Aorta (tissue), 5 donors: ENCODE measurements at regions of chr2 and their contacts with region 1.

Region 1: DNA sequence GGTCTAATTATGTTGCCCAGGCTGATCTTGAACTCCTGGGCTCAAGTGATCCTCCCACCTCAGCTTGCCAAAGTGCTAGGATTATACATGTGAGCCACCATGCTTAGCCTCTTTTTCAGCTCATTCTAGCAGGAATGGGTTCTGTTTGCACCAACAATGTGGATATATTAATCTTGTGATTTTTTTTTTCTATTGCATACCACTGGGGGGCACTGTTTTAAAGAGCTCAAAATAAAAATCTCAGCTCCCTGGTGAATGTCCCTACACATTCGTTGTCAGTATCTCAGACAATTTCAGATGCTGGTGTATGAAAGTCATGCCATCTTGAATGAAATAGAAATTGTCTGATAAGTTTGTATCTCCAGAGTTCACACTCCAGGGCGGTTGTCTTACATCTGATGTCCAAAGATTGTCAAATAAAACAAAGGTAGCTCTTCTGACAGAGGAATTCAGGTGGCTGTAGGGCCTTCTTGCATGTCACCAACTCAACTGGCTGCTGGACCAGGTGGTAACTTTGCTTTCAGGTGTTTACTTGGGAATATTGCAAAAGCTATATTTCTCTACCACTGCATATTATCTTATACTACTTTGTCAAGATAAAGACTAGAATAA is 3.1 kb upstream of the MATN3 start:
- DNase-seq: no peak
- ATAC-seq: peak; percentile 69
- H3K4me3 ChIP-seq: no peak overlapping the region
- H3K27ac ChIP-seq: no peak overlapping the region
- H3K4me1 ChIP-seq: no peaks in the 10 kb centered on the region
- H3K27me3 ChIP-seq: no peaks in the 10 kb centered on the region

Region 2: GRCh38 chr2:19989681-19990415 is 25.7 kb before region 1 on chr2 and contains the start of gene WDR35:
- intact Hi-C with region 1: loop called in 1 of 2 experiments (anchors 2 kb)
- DNase-seq: peak; percentile 94 to 97
- ATAC-seq: peak; percentile 98
- H3K4me3 ChIP-seq: peak within 1 kb of the TSS; percentile 43 to 81
- H3K27ac ChIP-seq: peak within 1 kb of the TSS in 1 of 2 donors; percentile 72
- H3K4me1 ChIP-seq: no peaks in the 10 kb centered on the region
- H3K27me3 ChIP-seq: no peaks in the 10 kb centered on the region
- total RNA-seq, gene WDR35: 7.5 to 9.8 TPM

Region 3: DNA sequence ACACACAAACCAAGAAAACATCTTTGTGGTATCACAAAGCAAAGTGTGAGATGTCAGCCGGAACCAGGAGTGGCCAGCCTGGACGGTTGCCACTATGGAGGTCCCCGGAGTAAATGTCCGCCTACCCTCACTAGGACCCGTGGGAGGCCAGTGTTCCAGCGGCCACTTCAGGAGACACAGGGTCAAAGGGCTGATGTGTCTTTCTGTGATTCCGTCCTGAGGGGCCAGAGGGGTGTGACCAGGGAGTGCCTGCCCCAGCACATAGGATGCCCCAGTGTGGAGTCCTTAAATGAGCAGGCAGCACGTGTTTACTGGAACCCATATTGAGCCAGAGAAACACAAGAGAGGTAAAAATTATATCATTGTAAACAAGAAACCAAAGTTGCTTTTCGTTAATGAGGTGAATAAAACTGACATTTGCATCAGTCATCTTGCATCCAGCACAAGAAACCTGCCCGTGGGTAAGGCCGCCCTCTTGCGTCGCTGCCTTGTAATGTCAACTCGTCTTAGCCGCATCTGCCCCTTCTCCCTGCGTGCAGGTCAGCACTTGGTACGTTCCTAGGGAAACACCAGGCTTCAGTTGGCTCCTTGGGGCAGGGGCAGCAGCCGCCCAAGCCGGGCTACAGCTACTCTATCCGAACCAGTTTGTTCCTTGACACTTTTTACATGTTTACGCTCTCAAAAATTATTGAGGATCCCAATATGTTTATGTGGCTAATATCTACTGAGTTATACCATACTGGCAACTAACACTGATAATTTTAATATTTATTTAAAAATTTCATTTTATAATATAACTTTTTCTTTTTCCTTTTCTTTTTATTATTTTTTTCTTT is 82.5 kb after region 1 on chr2:
- intact Hi-C with region 1: loop called (anchors 1 kb)
- DNase-seq: peak; percentile 87 to 94
- ATAC-seq: peak; percentile 86
- H3K4me3 ChIP-seq: no peak overlapping the region
- H3K27ac ChIP-seq: no peak overlapping the region
- H3K4me1 ChIP-seq: no peaks in the 10 kb centered on the region
- H3K27me3 ChIP-seq: no peaks in the 10 kb centered on the region